ENCODE measurements at regions of chr12 and their contacts with region 1.

Region 1: GRCh38 chr12:53220801-53221202 is 11.2 kb downstream of the RARG start:
- DNase-seq: peak; percentile 93
- ATAC-seq: peak; percentile 57
- H3K4me3 Mint-ChIP-seq: peak overlapping the region; percentile 83
- H3K27ac Mint-ChIP-seq: peak overlapping the region; percentile 87
- H3K4me1 Mint-ChIP-seq: peaks cover 78% of the 10 kb centered on the region
- H3K27me3 Mint-ChIP-seq: no peaks in the 10 kb centered on the region

Region 2: DNA sequence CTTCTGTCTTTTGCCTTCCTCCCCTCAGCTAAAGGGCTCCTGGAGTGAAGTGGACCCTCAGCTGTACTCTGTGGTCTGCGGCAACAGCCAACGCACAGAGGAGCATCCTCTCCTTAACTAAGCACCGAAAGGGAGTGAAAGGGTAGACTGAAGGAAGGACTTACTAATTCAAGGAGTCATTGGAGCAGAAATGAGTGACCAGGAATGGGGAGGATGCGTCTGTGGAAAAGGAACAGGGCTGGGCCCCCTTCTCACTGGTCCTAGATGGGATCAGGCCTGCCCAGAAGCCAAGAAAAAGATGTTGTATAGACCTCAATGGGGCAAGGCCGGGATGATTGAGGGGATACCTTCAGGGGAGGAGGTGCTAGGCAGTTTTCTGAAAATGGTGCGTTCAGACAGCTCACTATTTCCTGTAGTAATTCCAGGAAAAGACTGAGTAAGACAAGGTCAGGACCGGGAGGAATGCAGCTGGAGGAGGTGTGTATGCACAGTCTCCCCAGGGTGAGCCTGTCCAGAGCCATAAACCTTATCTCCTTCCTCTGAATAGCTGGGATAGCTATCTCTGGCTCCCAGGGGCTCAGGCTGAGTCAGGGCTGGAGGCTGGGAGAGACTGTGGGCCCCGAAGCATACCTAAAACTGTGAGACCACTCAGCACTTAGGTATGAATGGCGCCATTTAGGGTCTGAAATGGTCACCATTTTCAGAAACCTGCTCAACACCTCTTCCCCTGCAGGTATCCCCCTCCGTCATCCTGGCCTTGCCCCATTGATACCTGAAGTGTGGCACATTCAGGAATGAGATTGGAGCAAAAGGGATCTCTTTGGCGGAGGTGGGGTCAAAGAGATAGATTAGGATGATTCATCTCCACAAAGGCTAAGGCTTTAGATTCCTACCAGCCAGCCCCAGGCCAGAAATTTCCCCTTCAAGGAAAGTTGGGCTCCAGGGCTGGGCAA is 295.8 kb before region 1 on chr12:
- CTCF ChIA-PET with region 1: no interaction called
- POLR2A ChIA-PET with region 1: no interaction called
- intact Hi-C with region 1: no loop called
- DNase-seq: no peak
- ATAC-seq: no peak
- H3K4me3 Mint-ChIP-seq: no peak overlapping the region
- H3K27ac Mint-ChIP-seq: no peak overlapping the region
- H3K4me1 Mint-ChIP-seq: no peaks in the 10 kb centered on the region
- H3K27me3 Mint-ChIP-seq: no peaks in the 10 kb centered on the region

Region 3: GRCh38 chr12:53205747-53206419 is 14.9 kb before region 1 on chr12:
- CTCF ChIA-PET with region 1: interaction called, 11 read pairs
- POLR2A ChIA-PET with region 1: interaction called, 6 read pairs
- intact Hi-C with region 1: loop called in 1 of 2 experiments (anchors 1 kb)
- DNase-seq: peak; percentile 89
- ATAC-seq: peak; percentile 78
- H3K4me3 Mint-ChIP-seq: peak overlapping the region; percentile 77
- H3K27ac Mint-ChIP-seq: peak overlapping the region; percentile 87
- H3K4me1 Mint-ChIP-seq: peaks cover 74% of the 10 kb centered on the region
- H3K27me3 Mint-ChIP-seq: no peaks in the 10 kb centered on the region

Region 4: DNA sequence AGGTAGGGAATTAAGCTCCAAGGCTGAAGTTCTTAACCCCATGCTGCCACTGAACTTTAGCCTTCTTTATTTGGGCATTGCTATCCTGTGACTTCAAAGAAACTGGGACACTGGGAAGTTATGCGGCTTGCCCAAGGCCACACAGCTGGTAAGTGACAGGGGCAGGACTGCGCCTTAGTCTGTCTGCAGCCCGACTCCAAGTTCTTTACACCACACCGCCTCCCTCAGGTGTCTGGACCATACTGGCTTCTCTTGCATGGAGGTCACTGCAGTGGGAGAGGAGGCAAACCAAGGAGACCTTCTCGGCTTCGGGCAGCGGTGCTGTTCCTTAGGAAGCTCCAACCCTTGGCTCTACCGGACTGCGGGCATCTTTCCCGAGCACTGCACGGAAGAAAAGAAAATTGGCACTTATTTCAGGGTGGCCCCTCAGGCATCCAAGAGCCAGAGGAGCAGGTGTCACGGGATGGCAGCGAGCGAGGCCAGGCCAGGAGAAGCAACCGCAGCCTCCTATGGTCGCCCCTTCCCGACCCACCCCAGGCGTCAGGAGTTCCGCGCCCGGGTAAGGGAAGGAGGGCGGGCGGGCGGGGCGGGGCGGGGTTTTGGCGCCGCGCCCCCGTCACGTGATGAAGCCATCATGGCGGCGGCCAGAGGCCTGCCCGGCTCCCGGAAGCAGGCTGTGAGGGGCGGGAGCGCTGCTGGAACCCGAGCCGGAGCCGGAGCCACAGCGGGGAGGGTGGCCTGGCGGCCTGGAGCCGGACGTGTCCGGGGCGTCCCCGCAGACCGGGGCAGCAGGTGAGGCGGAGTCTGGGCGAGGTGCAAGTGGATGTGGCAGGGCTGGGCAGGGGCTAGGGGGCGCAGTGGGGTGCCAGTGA is 30.9 kb after region 1 on chr12:
- CTCF ChIA-PET with region 1: interaction called, 8 read pairs
- POLR2A ChIA-PET with region 1: interaction called, 3 read pairs
- intact Hi-C with region 1: loop called (anchors 1 to 2 kb)
- DNase-seq: peak; percentile 83
- ATAC-seq: peak; percentile 91
- H3K4me3 Mint-ChIP-seq: peak overlapping the region; percentile 97
- H3K27ac Mint-ChIP-seq: peak overlapping the region; percentile 95
- H3K4me1 Mint-ChIP-seq: peaks cover 36% of the 10 kb centered on the region
- H3K27me3 Mint-ChIP-seq: no peaks in the 10 kb centered on the region

Region 5: DNA sequence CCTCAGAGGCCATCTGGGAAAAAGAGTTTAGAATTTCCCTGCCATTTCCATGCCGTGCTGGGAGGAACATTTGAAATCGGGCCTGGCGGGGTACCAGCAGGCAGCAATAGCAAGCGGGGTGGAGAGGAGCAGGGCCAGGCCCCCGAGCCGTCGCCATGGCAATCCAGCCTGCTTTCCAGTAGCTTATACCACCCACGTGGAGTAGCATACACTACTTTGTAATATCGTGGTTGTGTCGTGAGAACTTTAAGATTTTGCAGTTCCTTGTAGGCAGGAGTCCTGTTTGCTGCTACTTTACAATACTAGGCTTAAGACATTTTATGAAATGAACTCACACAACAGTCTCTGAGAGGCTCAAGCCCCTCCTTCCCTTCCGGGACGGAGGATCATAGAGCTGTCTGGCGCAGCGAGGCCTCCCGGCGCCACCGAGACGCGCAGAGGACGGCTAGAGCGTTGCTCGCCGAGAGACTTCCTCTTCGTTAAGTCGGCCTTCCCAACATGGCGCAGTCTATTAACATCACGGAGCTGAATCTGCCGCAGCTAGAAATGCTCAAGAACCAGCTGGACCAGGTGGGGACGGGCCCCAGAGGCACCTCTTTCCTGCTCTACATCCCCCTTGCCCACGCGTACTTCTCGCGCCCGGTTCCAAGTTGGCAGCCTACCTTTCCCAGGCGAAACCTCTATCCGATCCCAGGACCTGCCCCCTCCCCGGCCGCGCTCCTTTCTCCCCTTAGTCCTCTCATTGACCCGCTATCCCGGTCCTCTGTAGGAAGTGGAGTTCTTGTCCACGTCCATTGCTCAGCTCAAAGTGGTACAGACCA is 74.5 kb after region 1 on chr12 and contains the start of gene PFDN5:
- CTCF ChIA-PET with region 1: interaction called, 173 read pairs
- POLR2A ChIA-PET with region 1: interaction called, 13 read pairs
- intact Hi-C with region 1: loop called (anchors 1 to 2 kb)
- DNase-seq: peak; percentile 93
- ATAC-seq: peak; percentile 88
- H3K4me3 Mint-ChIP-seq: peak within 1 kb of the TSS; percentile 85
- H3K27ac Mint-ChIP-seq: peak within 1 kb of the TSS; percentile 94
- H3K4me1 Mint-ChIP-seq: peaks cover 52% of the 10 kb centered on the region
- H3K27me3 Mint-ChIP-seq: no peaks in the 10 kb centered on the region
- total RNA-seq, gene PFDN5: 253 to 322 TPM

Region 6: DNA sequence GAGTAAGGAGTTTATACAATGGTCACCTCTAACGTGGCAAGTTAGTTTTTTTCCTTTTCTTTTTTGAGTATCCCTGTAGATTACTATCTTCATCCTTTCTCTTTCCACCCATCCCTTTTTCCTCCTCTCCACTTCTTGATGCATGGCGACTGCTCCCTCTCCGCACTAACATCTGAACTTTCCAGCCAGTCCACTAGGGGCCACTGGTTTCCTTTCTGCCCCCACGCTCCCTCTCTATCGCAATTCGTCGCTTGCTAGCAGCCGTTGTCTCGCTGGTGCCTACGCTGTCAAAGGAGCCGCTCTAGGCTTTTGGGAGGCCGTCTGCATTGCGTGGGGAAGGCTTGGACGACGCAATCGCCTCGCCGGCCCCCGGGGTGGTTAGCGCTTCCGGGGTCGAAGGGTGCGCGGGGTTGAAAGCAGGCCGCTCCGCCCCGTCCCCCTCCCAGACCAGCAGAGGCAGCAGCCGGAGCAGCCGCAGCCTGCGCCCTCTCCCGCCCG is 230.9 kb after region 1 on chr12 and contains the start of gene PCBP2:
- CTCF ChIA-PET with region 1: no interaction called
- POLR2A ChIA-PET with region 1: no interaction called
- intact Hi-C with region 1: loop called in 1 of 2 experiments (anchors 2 kb)
- DNase-seq: peak; percentile 99
- ATAC-seq: peak; percentile 97
- H3K4me3 Mint-ChIP-seq: peak within 1 kb of the TSS; percentile 94
- H3K27ac Mint-ChIP-seq: peak within 1 kb of the TSS; percentile 96
- H3K4me1 Mint-ChIP-seq: peaks cover 27% of the 10 kb centered on the region
- H3K27me3 Mint-ChIP-seq: no peaks in the 10 kb centered on the region
- total RNA-seq, gene PCBP2: 881 to 999 TPM

Measured in activated CD4-positive, alpha-beta T cell treated with anti-CD3 and anti-CD28 coated beads for 36 hours (primary cell).